Activated naive CD4-positive, alpha-beta T cell treated with anti-CD3 and anti-CD28 coated beads for 36 hours (primary cell): ENCODE measurements at regions of chr7 and their contacts with region 1.

Region 1: GRCh38 chr7:32891800-32892520 is 400 bp upstream of the KBTBD2 start:
- DNase-seq: peak; percentile 99
- H3K4me3 Mint-ChIP-seq: peak overlapping the region; percentile 89
- H3K27ac Mint-ChIP-seq: peak overlapping the region; percentile 99
- H3K4me1 Mint-ChIP-seq: peaks cover 47% of the 10 kb centered on the region
- H3K27me3 Mint-ChIP-seq: no peaks in the 10 kb centered on the region

Region 2: DNA sequence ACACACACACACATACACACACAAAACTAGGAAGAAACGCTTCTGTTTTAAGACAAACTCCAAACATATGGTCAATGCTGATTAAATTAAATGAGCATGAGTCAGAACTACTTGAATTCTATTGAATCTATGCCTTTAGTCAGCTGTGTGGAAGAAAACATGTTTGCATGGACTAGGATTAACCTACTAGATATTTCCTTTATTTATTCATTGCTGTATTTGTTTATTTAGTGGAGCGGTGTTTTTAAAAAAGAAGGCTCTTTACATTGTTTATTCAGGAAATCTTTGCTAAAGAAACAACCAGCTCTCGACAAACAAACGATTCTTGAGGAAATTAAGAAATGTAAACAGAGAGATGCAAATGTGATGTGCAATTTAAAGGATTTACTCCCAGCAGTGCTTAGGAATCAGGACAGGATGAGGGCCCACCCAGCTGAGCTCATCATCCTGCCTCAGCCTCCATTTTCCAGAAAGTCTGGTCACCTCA is 905.0 kb before region 1 on chr7:
- CTCF ChIA-PET with region 1: no interaction called
- intact Hi-C with region 1: no loop called
- DNase-seq: no peak
- H3K4me3 Mint-ChIP-seq: no peak overlapping the region
- H3K27ac Mint-ChIP-seq: no peak overlapping the region
- H3K4me1 Mint-ChIP-seq: no peaks in the 10 kb centered on the region
- H3K27me3 Mint-ChIP-seq: no peaks in the 10 kb centered on the region

Region 3: DNA sequence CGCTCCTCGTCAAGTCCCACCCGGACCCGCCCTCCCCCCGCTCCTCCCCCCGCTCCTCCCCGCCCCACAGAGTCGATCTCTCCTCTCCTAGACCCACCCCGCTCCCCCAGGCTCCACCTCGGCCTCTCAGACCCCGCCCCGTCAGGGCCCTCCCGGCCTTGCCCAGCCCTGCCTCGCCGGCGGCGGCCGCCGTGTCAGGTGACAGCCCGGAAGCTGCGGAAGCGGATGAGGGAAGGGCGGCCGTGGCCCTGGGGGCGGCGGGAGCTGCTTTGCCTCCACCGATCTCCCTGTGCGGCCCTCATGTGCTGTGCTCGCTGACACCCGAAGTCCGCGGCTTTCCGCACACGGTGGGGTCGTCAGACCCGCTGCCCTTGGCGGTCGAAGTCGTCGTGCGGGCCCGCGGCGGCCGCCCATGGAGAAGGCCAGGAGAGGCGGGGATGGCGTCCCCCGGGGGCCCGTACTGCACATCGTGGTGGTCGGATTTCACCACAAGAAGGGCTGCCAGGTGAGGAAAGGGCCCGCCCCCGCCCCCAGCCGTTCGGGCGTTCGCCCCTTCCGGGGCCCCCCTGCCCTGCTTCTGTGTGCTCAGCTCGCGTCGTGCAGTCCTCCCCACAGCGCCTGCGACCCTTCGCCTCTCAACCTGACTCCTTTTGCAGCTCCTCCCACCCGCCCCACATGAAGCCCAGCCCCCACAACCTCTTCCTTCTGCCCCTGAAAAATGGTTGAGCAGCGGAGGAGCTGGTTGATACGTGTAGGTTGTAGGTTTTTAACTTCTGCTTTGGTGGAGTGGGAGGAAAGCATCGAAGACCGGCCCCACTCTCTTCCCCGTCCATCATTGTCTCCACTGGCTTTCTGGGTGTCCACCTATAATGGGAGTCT is 396.4 kb before region 1 on chr7 and contains the start of gene AVL9:
- CTCF ChIA-PET with region 1: no interaction called
- intact Hi-C with region 1: loop called (anchors 1 kb)
- DNase-seq: peak; percentile 99
- H3K4me3 Mint-ChIP-seq: peak within 1 kb of the TSS; percentile 96
- H3K27ac Mint-ChIP-seq: peak within 1 kb of the TSS; percentile 92
- H3K4me1 Mint-ChIP-seq: peaks cover 38% of the 10 kb centered on the region
- H3K27me3 Mint-ChIP-seq: no peaks in the 10 kb centered on the region
- total RNA-seq, gene AVL9: 29.6 to 38.0 TPM

Region 4: DNA sequence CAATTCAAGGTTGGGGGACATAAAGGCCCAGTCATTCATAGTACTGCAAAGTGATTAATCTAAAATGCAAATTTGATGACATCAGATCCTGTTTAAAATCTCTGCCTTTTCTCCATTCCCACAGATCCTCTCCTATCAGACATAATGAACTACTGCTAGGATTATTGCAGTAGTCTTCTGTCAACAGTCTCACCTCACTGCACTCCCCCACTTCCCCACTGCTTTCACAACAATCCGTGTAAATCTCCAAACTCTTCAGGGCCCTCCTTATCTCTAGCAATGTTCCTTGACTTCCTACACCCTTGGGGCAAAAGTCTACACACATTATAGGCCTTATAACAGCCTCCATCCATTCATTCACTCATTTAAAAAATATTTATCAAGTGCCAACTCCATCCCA is 112.8 kb before region 1 on chr7:
- CTCF ChIA-PET with region 1: no interaction called
- intact Hi-C with region 1: no loop called
- DNase-seq: no peak
- H3K4me3 Mint-ChIP-seq: no peak overlapping the region
- H3K27ac Mint-ChIP-seq: no peak overlapping the region
- H3K4me1 Mint-ChIP-seq: no peaks in the 10 kb centered on the region
- H3K27me3 Mint-ChIP-seq: peaks cover 3% of the 10 kb centered on the region

Region 5: DNA sequence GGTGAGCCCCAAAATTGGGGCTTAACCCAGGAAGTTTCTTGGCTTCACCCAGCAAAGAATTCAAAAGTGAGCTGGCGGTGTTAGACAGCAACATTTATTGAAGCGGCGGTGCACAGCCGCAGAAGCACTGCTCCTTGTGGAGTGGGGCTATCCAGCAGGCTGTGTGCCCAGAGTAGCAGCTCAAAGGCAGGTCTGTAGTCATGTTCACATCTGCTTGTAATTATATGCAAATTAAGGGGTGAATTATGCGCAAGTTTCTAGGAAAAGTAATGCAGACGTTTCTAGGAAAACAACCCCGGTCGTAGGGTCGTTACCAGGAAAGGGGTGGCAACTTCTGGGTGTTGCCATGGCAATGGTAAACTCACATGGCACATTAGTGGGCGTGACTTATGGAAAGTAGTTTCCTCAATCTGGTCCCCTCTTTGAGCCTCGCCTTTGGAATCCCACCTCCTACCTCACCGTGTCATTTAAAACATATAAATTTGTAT is 13.3 kb after region 1 on chr7:
- CTCF ChIA-PET with region 1: interaction called, 9 read pairs
- intact Hi-C with region 1: loop called (anchors 1 kb)
- DNase-seq: peak; percentile 88
- H3K4me3 Mint-ChIP-seq: peak overlapping the region; percentile 70
- H3K27ac Mint-ChIP-seq: peak overlapping the region; percentile 87
- H3K4me1 Mint-ChIP-seq: peaks cover 18% of the 10 kb centered on the region
- H3K27me3 Mint-ChIP-seq: no peaks in the 10 kb centered on the region

Region 6: DNA sequence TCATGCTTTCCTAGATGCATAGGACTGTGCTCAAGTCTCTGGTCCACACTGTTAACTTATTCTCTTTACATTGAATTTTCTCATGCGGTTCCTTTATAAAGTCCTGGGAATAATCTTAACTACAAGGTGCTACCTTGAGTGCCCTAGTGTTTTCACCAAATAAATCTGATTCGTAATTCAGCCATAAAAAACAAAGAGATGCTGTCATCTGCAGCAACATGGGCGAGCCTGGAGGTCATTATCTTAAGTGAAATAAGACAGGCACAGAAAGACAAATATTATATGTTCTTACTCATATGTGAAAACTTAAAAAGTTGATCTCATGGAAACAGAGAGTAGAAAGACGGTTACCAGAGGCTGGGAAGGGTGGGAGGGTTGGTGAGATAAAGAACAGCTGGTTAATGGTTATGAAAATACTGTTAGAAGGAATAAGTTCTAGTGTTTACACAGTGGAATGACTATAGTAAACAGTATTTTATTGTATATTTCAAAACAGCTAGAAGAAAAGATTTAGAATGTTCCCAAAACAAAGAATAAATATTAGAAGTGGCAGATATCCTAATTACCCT is 132.3 kb after region 1 on chr7:
- CTCF ChIA-PET with region 1: no interaction called
- intact Hi-C with region 1: no loop called
- DNase-seq: no peak
- H3K4me3 Mint-ChIP-seq: no peak overlapping the region
- H3K27ac Mint-ChIP-seq: no peak overlapping the region
- H3K4me1 Mint-ChIP-seq: no peaks in the 10 kb centered on the region
- H3K27me3 Mint-ChIP-seq: no peaks in the 10 kb centered on the region

Region 7: DNA sequence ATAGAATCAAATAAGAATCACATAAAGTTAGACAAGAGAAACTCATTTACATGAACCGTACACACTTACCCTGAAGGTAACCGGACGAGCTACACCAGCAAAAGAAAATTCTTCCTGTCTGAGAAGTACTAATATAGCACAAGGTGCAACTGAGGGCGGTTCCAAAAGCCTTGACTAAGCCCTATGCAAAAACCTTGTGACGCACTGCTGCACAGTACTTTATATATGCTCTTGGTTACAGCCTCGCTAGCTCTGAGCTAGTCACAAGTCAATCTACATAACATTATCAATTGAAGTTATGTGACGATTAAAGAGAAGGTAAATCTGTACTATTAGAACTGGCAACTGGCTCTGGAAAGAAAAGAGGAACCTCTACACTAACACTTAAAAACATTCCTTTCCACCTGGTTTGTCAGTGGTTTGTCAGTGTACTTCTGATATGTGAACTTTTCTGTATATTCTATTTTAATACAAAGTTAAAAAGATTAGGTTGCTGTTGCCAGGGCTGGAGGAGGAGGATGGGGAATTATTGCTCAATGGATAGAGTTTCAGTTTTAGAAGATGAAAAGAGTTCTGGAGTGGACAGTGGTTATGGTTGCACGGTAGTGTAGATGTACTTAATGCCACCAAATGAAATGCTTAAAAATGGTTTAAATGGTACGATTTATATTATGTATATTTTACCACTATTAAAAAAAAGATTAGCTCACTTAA is 149.0 kb after region 1 on chr7:
- CTCF ChIA-PET with region 1: no interaction called
- intact Hi-C with region 1: loop called (anchors 1 kb)
- DNase-seq: peak; percentile 84
- H3K4me3 Mint-ChIP-seq: peak overlapping the region; percentile 69
- H3K27ac Mint-ChIP-seq: peak overlapping the region; percentile 86
- H3K4me1 Mint-ChIP-seq: peaks cover 47% of the 10 kb centered on the region
- H3K27me3 Mint-ChIP-seq: no peaks in the 10 kb centered on the region

Region 8: DNA sequence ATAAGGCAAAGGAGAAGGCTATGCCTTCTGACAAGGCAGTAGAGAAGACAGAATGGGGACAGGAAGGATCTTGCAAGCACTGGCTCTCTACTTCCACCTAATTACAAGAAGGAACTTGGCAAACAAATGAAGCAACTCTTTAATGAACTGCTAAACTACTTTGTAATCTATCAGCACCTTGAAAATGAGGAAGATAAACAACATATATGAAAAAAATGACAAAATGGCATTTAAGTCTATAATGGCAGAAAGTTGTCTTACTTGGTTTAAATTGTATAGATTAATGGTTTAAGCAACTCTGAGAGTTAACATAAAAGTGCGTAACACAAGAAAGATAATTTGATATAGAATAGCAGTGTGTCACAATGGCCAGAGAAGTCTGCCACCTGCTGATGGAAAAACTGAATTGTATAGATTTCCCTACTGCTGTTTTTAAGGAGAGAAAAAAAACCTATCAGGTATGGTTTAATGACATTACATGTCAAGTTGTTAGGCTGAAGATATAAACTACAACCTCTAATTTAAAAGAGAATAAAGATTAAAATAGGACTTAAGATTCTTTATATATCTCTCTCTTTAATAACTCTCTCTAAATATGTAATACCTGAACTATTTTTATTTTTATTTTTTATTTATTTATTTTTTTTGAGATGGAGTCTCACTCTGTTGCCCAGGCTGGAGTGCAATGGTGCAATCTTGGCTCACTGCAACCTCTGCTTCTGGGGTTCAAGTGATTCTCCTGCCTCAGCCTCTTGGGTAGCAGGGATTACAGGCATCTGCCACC is 158.8 kb after region 1 on chr7:
- CTCF ChIA-PET with region 1: no interaction called
- intact Hi-C with region 1: loop called (anchors 2 kb)
- DNase-seq: peak; percentile 38
- H3K4me3 Mint-ChIP-seq: no peak overlapping the region
- H3K27ac Mint-ChIP-seq: no peak overlapping the region
- H3K4me1 Mint-ChIP-seq: peaks cover 54% of the 10 kb centered on the region
- H3K27me3 Mint-ChIP-seq: no peaks in the 10 kb centered on the region

Region 9: GRCh38 chr7:33062782-33063443 is 171.0 kb after region 1 on chr7:
- CTCF ChIA-PET with region 1: interaction called, 3 read pairs
- intact Hi-C with region 1: loop called (anchors 1 kb)
- DNase-seq: peak; percentile 93
- H3K4me3 Mint-ChIP-seq: peak overlapping the region; percentile 92
- H3K27ac Mint-ChIP-seq: peak overlapping the region; percentile 88
- H3K4me1 Mint-ChIP-seq: peaks cover 30% of the 10 kb centered on the region
- H3K27me3 Mint-ChIP-seq: no peaks in the 10 kb centered on the region

Region 10: DNA sequence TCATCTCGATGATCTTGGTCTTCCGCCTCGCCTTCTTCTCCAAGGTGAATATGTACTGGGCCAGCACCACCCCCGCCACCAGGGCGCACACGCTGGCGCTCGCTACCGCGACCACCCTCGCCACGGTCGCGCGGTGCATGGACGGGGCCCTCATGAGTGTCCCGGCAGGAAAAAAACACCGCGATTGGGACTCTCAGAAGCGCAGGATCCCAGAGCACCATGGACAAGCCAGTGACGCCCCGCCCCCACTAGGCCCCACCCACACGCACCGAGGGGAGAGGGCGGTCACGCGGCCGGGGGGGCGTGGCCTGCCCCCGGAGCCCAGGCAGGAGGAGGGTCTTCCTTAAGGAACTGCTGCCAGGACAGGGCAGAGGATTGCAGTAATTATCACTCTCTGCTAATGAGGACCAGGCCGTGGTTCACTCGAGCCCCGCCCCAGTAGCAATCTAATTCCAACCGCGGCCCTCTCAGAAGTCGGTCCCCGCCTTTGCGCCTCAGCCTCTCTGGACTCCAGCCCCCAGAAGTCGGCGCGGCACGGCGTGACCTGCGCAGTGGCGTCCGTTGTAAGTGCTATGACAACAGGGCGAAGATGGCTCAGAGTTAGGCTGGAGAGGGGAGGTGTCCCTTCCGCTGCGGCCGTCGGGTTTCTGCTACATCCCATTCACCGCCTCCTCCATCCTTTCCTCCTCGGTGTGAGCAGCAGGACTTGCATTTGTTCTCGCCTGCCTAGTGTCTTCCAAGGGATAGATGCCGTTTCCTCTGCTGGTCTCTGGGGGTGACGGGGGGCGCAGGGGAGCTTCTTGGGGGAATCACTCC is 237.2 kb after region 1 on chr7 and contains the start of gene BBS9:
- CTCF ChIA-PET with region 1: no interaction called
- intact Hi-C with region 1: loop called (anchors 1 kb)
- DNase-seq: peak; percentile 95
- H3K4me3 Mint-ChIP-seq: peak within 1 kb of the TSS; percentile 93
- H3K27ac Mint-ChIP-seq: peak within 1 kb of the TSS; percentile 72
- H3K4me1 Mint-ChIP-seq: peaks cover 21% of the 10 kb centered on the region
- H3K27me3 Mint-ChIP-seq: no peaks in the 10 kb centered on the region
- total RNA-seq, gene BBS9: 7.0 to 7.4 TPM

Region 11: DNA sequence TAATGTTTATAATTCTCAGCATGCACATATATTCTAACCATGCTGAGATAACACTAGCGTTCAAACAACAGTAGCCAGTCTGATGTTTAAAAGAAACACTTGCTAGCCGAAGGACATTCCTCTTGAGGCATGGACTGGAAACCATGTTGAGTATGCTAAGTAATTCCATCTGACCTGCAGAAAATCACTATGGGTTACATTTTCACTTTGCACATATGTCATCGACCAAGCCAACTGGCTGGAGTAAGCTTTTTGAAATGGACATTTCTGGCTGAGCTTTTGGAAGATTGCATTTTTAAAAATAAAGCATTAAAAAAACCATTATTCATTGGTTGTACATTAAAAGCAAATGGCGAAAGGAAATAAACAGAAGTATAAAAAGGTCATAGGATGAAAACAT is 325.6 kb after region 1 on chr7:
- CTCF ChIA-PET with region 1: no interaction called
- intact Hi-C with region 1: no loop called
- DNase-seq: no peak
- H3K4me3 Mint-ChIP-seq: no peak overlapping the region
- H3K27ac Mint-ChIP-seq: no peak overlapping the region
- H3K4me1 Mint-ChIP-seq: no peaks in the 10 kb centered on the region
- H3K27me3 Mint-ChIP-seq: no peaks in the 10 kb centered on the region